OCI-LY7 (cell line): ENCODE measurements at regions of chr7 and their contacts with region 1.

Region 1: DNA sequence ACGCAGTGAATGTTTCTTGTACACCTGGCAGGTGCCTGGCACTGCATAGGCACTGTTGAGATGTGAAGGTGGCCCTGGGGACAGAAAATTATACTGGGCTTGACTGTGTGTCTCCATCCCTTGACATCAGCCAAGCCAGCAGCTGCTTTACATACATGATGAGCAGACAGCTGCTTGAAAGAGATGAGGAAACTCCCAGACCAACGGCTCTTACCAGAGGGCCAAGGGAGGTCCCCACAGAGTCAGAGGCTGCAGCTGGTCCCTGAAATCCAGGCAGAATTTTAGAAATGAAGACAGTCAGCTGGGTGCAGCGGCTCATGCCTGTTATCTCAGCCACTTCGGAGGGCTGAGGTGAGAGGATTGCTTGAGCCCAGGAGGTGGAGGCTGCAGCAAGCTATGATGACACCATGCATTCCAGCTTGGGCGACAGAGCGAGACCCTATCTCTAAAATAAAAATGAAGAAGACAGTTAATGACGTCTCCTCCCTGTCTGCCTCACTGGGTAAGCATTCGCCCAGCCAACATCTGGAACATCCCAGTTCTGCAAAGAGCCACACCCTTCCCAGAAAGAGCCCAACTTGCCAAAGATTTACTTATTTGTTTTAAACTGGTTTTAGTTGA is 17.6 kb downstream of the LIMK1 start:
- DNase-seq: peak; percentile 97
- H3K4me3 ChIP-seq: peak overlapping the region; percentile 57
- H3K27ac ChIP-seq: peak overlapping the region; percentile 99
- H3K4me1 ChIP-seq: peaks cover 54% of the 10 kb centered on the region
- CTCF ChIP-seq: no peak

Region 2: GRCh38 chr7:74068393-74069085 is 32.6 kb before region 1 on chr7:
- CTCF ChIA-PET with region 1: no interaction called
- POLR2A ChIA-PET with region 1: no interaction called
- intact Hi-C with region 1: loop called (anchors 2 kb)
- DNase-seq: no peak
- H3K4me3 ChIP-seq: no peak overlapping the region
- H3K27ac ChIP-seq: no peak overlapping the region
- H3K4me1 ChIP-seq: peaks cover 12% of the 10 kb centered on the region
- CTCF ChIP-seq: no peak

Region 3: GRCh38 chr7:74083117-74083876 is 17.9 kb before region 1 on chr7 and contains the start of gene LIMK1:
- CTCF ChIA-PET with region 1: no interaction called
- POLR2A ChIA-PET with region 1: interaction called, 13 read pairs
- intact Hi-C with region 1: loop called (anchors 1 kb)
- DNase-seq: peak; percentile 88
- H3K4me3 ChIP-seq: peak within 1 kb of the TSS; percentile 83
- H3K27ac ChIP-seq: peak within 1 kb of the TSS; percentile 31
- H3K4me1 ChIP-seq: peaks cover 30% of the 10 kb centered on the region
- CTCF ChIP-seq: no peak
- total RNA-seq, gene LIMK1: 21.9 and 31.7 TPM in 2 replicates

Region 4: GRCh38 chr7:74173866-74174605 is 72.9 kb after region 1 on chr7 and contains the start of gene EIF4H:
- CTCF ChIA-PET with region 1: no interaction called
- POLR2A ChIA-PET with region 1: interaction called, 5 read pairs
- intact Hi-C with region 1: loop called (anchors 2 kb)
- DNase-seq: peak; percentile 96
- H3K4me3 ChIP-seq: peak within 1 kb of the TSS; percentile 94
- H3K27ac ChIP-seq: peak within 1 kb of the TSS; percentile 59
- H3K4me1 ChIP-seq: peaks cover 47% of the 10 kb centered on the region
- CTCF ChIP-seq: no peak
- total RNA-seq, gene EIF4H: 202 and 231 TPM in 2 replicates

Region 5: DNA sequence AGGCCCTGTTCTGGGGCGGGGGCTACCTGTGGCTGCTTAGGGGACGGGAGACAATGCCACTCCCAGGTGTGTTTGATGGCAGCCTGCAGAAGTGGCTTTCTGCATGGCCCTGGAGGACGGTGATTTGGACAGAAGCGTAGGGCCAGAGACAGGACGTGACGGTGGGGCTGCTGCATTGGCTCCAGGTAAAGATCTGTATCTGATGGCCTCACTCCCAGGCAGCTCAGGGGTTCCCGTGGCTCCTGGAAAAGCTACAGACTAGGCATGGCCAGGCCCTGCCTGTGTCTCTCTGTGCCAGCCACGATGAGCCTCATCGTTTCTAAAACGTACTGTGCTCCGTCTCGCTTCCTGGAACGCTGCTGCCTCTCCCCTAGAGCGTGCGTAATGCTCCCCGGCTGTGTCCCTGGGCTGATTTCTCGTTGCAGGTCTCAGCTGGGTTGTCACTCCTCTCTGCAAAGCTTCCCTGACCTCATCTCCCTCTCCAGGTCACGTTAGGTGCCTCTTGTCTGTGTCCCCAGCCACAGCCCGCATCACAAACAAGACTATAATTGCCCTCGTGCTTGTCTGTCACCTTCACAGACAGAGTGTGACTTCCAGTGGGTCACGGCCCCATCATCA is 365.1 kb after region 1 on chr7:
- CTCF ChIA-PET with region 1: no interaction called
- POLR2A ChIA-PET with region 1: interaction called, 3 read pairs
- intact Hi-C with region 1: loop called (anchors 5 kb)
- DNase-seq: peak; percentile 56
- H3K4me3 ChIP-seq: peak overlapping the region; percentile 28
- H3K27ac ChIP-seq: peak overlapping the region; percentile 36
- H3K4me1 ChIP-seq: peaks cover 47% of the 10 kb centered on the region
- CTCF ChIP-seq: no peak

Region 6: DNA sequence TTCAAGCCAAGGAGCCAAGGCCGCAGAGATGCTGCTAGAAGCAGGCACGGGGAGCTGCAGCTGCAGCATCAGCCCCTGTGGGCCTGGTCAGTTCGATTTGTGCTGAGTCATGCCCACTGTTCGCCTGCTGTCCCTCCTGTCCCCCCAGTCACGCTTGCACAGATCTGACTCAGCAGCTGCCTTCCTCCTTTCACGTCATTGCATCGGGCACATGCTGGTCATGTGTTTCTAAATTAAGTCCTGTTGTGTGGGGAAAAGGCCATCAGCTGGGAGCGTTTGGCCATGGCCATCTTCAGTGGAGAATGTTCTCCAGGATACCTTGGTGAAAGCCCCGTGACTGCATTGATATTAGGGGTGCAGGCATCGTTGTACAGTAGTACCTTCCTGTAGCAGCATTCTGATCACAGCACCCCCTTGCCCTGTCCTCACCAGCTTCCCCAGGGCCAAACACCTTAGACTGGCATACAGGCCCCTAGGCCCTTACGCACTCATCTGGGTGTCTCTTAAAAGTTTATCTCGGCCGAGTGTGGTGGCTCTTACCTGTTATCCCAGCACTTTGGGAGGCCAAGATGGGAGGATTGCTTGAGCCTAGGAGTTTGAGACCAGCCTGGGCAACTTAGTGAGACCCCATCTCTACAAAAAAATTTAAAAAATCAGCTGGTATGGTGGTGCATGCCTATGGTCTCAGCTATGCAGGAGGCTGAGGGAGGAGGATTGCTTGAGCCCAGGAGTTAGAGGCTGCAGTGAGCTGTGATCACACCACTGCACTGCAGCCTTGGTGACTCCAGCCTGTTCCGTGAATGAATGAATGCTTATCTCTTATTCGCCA is 1837.0 kb after region 1 on chr7:
- CTCF ChIA-PET with region 1: no interaction called
- POLR2A ChIA-PET with region 1: no interaction called
- intact Hi-C with region 1: no loop called
- DNase-seq: no peak
- H3K4me3 ChIP-seq: no peak overlapping the region
- H3K27ac ChIP-seq: no peak overlapping the region
- H3K4me1 ChIP-seq: no peaks in the 10 kb centered on the region
- CTCF ChIP-seq: no peak